Posterior cingulate gyrus (tissue), 11 donors: ENCODE measurements at regions of chr11 and their contacts with region 1.

Region 1: DNA sequence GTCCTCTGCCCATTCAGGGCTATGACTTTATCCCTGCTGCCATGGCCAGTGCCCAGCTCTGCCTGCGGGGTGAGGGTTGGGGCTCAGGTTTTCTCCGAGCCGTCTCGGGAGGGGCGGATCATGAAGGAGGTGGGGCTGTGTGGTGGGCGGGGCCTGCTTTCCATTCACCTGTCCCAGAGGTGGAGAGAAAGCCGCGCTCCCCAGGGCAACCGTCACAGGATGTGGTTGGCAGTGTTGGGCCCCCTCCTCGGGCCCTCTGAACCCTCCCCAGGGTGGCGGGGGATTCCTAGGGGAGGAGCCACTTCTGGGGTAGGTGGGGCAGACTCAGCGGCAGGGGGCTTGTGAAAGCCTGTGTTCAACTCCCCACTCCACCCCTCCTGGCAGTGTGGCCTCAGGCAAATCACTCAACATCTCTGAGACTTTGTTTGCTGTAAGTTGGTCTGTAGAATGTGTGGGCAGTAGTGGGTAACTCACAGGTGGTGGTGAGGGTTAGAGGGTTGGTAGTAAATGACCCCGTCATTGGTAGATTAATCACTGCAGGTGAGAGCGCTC is 50.3 kb downstream of the CD6 start:
- DNase-seq: peak in 2 of 10 donors; percentile 65 to 81

Region 2: GRCh38 chr11:60513496-60514460 is 508.0 kb before region 1 on chr11:
- intact Hi-C with region 1: no loop called
- DNase-seq: no peak

Region 3: GRCh38 chr11:60899046-60899936 is 122.4 kb before region 1 on chr11:
- intact Hi-C with region 1: no loop called
- DNase-seq: no peak

Region 4: DNA sequence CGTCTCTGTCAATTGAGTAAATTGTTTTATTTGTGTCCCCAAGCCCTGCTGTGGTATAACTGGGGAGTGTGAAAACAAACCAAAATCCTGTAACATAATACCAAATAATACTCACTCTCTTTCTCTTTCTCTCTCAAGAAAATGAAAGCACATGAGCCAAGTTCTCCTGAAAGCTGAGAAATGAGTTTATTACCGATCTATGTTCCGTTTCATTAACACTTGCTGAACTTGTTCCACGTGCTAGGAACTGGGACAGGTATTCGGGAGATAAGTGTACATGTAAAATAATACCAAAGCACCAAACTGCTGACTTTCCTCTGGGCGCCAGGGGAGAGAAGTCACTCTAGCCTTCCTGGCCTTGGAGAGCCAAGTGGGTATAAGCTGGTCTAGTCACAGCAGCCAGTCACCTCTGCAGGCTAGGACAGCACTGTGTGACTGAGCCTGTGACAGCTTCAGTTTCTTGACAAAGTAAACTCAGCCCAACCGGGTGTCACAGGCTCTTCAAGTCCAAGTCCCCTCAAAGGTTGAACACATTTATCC is 27.1 kb before region 1 on chr11:
- intact Hi-C with region 1: loop called (anchors 1 kb)
- DNase-seq: peak in 2 of 10 donors; percentile 13 to 55

Region 5: DNA sequence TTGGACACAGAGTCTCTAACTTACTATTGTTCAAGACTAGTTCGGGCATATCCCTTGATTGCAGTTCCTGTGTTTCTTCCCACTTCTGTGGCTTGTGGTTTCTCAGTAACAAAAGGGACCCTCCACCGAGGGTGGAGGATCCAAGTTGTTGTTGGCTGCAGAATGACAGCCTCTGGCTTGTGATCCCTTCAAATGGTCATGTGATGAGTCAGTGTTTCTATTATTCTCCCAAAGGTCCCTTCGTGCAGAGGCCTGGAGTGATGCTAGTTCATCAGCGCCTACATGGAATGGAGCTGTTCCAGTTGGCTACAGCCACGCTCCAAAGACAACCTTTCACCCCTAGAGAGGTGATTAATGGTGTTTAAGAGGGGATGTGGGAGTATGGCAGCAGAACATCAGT is 276.0 kb after region 1 on chr11:
- intact Hi-C with region 1: no loop called
- DNase-seq: no peak